ENCODE measurements at regions of chr7 and their contacts with region 1.

Region 1: GRCh38 chr7:23863209-23863798 is 153.3 kb downstream of the STK31 start:
- DNase-seq: peak; percentile 53
- H3K4me3 ChIP-seq: no peak overlapping the region
- H3K27ac ChIP-seq: peak overlapping the region in 1 of 2 experiments; percentile 16; a peak in 1 of 4 replicates
- H3K4me1 ChIP-seq: peaks cover 0 to 6% of the 10 kb centered on the region in 2 experiments; a peak in 1 of 4 replicates
- H3K27me3 ChIP-seq: no peaks in the 10 kb centered on the region
- CTCF ChIP-seq: peak; percentile 96
- EP300 ChIP-seq: no peak
- RAD21 ChIP-seq: peak; percentile 99

Region 2: DNA sequence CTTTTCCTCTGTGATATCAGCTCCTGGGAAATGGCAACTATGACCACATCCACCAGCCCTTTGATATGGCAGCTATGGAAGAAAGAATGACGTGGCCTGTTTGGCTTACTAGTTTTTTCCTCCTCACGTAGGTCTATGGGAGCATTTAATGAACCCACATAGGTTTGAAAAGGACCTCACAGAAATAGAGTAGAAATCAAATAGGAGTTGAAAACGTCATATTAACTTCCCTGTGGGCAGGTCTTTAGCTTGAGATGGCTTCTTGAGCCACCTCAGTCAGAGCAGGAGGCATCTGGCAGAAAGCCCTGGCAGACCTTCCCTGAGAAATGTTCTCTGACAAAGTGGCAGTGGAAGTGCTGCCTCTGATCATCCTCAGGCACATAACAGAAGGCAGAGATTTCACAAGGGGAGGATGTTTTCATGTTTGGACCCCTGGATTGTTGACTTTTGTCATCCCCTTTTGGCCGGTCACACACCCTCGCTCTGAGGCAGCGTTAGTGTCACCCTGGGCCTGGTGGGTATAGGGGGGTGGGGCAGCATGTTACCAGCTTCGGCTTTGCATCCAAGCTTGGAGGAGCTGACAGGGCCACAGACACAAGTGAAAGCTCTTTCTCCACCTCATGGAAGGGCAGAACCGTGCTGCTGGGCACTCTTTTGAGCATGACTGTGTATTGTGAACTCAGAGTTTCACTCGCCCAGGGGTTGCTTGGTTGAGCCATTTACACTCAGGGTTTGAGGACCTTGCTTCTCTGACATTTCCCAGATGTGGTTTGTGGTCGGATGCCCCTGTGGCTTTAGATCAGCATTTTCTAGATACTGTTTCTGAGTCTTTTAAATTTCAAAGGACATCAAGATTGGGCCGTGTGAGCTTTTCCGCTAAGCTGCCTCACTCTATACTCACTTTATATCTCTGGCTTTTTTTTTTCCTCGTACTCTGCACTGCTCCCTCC is 30.9 kb after region 1 on chr7:
- CTCF ChIA-PET with region 1: interaction called, 39 read pairs
- POLR2A ChIA-PET with region 1: no interaction called
- DNase-seq: peak; percentile 44
- H3K4me3 ChIP-seq: 0 out of 4 replicates have a peak overlapping the region, but pooled peaks of 1 of the 2 experiments have one; percentile 7
- H3K27ac ChIP-seq: peak overlapping the region; percentile 63 to 82
- H3K4me1 ChIP-seq: peaks cover 23 to 35% of the 10 kb centered on the region in 2 experiments
- H3K27me3 ChIP-seq: no peaks in the 10 kb centered on the region
- CTCF ChIP-seq: no peak
- EP300 ChIP-seq: 0 out of 4 replicates have a peak, but pooled peaks of 1 of the 2 experiments have one; percentile 24
- RAD21 ChIP-seq: no peak

Region 3: DNA sequence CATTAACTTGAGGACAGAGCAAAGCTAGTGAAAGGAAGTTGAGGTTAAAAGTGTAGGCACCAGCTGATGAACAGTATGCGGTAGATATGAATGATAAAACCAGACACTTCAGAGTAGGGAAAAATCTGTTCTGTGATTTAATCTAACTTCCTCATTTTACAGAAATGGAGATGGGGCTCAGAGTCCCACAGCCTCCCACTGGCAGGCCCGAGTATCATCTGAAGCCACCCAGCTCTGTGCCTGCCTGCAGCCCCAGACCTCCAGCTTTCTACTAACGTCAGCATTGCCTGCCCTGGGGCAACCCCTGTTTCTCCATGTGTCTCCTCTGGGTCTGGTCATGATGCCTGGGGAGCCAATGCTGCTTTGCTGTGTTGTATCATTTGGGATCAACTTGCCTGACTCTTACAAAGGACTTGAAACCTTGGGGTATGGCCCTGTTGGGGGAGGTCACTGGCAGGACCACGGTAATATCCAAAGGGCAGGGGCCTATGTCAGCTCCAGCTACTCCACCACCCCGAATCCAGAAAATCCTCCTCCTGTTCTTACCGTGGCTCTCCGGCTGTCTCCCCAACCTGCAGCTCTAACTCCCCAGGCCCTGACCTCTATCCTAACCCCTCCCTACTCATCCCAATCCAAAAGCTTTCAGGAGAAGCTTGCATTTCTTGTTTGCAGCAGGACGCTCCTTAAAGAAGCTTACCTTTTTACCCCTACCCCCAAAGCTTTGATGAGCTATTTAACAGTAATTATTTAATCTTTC is 364.5 kb after region 1 on chr7:
- CTCF ChIA-PET with region 1: interaction called, 14 read pairs
- POLR2A ChIA-PET with region 1: interaction called, 3 read pairs
- DNase-seq: peak; percentile 75
- H3K4me3 ChIP-seq: no peak overlapping the region
- H3K27ac ChIP-seq: peak overlapping the region in 1 of 2 experiments; percentile 97; a peak in 2 of 4 replicates
- H3K4me1 ChIP-seq: peaks cover 0 to 36% of the 10 kb centered on the region in 2 experiments; a peak in 2 of 4 replicates
- H3K27me3 ChIP-seq: no peaks in the 10 kb centered on the region
- CTCF ChIP-seq: no peak
- EP300 ChIP-seq: peak in 1 of 2 experiments; percentile 89; a peak in 2 of 4 replicates
- RAD21 ChIP-seq: peak; percentile 49

Region 4: GRCh38 chr7:24388212-24388611 is 524.9 kb after region 1 on chr7:
- CTCF ChIA-PET with region 1: interaction called, 15 read pairs
- POLR2A ChIA-PET with region 1: no interaction called
- DNase-seq: no peak
- H3K4me3 ChIP-seq: no peak overlapping the region
- H3K27ac ChIP-seq: peak overlapping the region in 1 of 2 experiments; percentile 6; a peak in 1 of 4 replicates
- H3K4me1 ChIP-seq: peaks cover 0 to 5% of the 10 kb centered on the region in 2 experiments; a peak in 2 of 4 replicates
- H3K27me3 ChIP-seq: no peaks in the 10 kb centered on the region
- CTCF ChIP-seq: no peak
- EP300 ChIP-seq: no peak
- RAD21 ChIP-seq: no peak